Tibial artery (tissue), 4 donors: ENCODE measurements at regions of chr17 and their contacts with region 1.

Region 1: GRCh38 chr17:68771867-68772515 is 170.8 kb upstream of the FAM20A start:
- DNase-seq: no peak
- H3K4me3 ChIP-seq: peak overlapping the region; percentile 7 to 22
- H3K27ac ChIP-seq: peak overlapping the region in 1 of 2 donors; percentile 42
- H3K4me1 ChIP-seq: peaks cover 0 to 17% (median 9%) of the 10 kb centered on the region in 4 donors
- H3K27me3 ChIP-seq: no peaks in the 10 kb centered on the region
- CTCF ChIP-seq: peak; percentile 54 to 58

Region 2: DNA sequence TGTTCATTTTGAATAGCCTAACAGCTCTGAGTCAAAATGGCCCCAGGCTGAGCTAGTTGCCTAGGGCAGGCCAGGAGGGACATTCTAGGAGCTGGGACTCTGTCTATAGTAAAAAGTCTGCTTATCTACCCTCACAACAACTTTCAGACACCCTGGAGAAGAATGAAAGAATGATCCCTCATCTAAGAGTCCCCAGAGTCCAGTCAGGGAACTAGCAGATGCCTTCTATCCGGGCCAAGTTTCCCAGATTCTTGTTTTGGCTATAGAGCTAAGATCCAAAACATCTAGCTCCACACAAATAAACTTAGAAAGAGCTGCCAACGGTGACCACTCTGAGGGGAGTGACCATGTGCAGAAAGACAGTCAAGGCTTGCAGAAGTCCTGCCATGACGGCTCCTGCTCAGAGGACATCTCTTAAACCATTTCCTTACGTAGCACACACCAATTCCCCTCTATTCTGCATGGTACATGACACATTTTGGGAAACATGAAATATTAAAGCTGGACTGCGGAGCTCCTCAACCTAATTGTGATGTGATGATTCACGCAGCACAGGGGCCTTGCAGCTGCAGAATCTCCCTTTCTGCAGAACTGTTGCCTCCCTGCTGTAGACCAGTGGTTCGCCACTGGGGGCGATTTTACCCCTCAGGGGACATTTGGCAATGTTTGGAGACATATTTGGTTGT is 195.0 kb before region 1 on chr17:
- intact Hi-C with region 1: no loop called
- DNase-seq: no peak
- H3K4me3 ChIP-seq: no peak overlapping the region
- H3K27ac ChIP-seq: no peak overlapping the region
- H3K4me1 ChIP-seq: peaks cover 0 to 5% (median 0%) of the 10 kb centered on the region in 4 donors
- H3K27me3 ChIP-seq: no peaks in the 10 kb centered on the region
- CTCF ChIP-seq: no peak

Region 3: DNA sequence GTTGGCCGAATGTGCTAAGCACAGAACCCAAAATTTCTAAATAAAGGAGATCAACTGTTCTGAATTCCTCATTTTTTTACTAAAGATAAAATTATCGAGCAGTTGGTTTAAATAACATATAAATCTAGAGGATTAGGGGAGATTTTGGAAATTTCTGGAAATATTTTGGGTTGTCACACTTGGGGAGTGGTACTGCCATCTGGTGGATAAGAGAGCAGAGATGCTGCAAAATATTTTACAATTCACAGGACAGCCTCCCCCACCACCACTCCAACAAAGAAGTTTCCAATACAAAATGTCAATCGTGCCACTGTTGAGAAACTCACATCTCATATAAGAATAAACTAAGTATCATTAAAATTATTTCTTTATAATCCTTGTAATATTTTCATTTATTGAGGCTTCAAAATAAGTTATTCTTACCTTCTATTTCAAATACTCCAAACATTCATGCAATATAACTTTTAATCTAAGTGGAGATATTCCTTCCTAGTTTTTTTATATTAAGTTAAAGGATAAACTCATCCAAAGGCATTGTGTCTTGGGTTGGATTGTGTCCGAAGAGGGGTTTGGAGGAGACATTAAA is 200.2 kb after region 1 on chr17:
- intact Hi-C with region 1: loop called (anchors 5 kb)
- DNase-seq: no peak
- H3K4me3 ChIP-seq: no peak overlapping the region
- H3K27ac ChIP-seq: no peak overlapping the region
- H3K4me1 ChIP-seq: no peaks in the 10 kb centered on the region
- H3K27me3 ChIP-seq: no peaks in the 10 kb centered on the region
- CTCF ChIP-seq: peak; percentile 29 to 43

Region 4: GRCh38 chr17:69232650-69233049 is 460.7 kb after region 1 on chr17:
- intact Hi-C with region 1: loop called (anchors 5 kb)
- DNase-seq: no peak
- H3K4me3 ChIP-seq: no peak overlapping the region
- H3K27ac ChIP-seq: no peak overlapping the region
- H3K4me1 ChIP-seq: no peaks in the 10 kb centered on the region
- H3K27me3 ChIP-seq: no peaks in the 10 kb centered on the region
- CTCF ChIP-seq: no peak